Activated T-helper 2 cell treated with anti-CD3 and anti-CD28 coated beads, Interferon-gamma antibody, Interleukin-2, Interleukin-4, amounts not matched to agents 10 μg/mL and 5 μg/mL and 100 μg/mL, durations not matched to agents 14 hours and 24 hours and 36 hours (primary cell): ENCODE measurements at regions of chr2 and their contacts with region 1.

Region 1: DNA sequence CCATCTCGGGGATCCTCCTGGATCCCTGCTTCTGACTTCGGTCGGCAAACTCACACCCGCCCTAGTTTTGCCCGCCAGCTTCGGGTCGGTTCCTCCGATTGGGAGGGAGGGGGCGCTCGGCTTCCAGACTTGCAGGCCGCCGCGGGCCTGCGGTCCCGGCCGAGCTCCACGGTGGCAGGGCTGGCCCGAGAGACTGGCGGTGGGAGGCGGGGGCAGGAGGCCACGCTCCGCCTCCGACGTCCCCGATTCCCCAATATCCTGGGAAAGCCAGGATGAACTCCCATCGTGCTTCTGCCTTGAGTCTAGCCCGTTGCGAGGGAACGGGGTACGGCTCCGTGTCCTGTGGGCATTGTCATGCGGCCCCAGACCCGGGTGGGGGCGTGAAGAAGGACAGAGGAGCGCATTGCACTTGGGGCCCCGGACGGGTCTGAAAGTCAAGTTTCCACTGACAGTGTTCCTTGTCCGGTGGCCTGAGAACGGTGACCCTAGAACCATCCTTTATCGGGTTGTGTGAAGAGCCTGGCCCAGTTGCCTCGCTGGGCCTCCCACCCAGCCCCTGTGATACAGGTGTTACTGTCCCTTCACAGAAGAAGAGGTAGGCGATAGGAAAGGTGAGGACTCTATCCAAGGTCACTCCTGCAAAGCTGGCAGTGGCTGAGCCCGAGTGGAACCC is 2.4 kb upstream of the INHBB start:
- DNase-seq: peak; percentile 38
- H3K4me3 Mint-ChIP-seq: peak overlapping the region; percentile 37
- H3K27ac Mint-ChIP-seq: no peak overlapping the region
- H3K4me1 Mint-ChIP-seq: peaks cover 10% of the 10 kb centered on the region
- H3K27me3 Mint-ChIP-seq: peaks cover 51% of the 10 kb centered on the region

Region 2: GRCh38 chr2:120109186-120110061 is 234.1 kb before region 1 on chr2:
- intact Hi-C with region 1: loop called (anchors 10 kb)
- DNase-seq: no peak
- H3K4me3 Mint-ChIP-seq: peak overlapping the region; percentile 57
- H3K27ac Mint-ChIP-seq: peak overlapping the region; percentile 38
- H3K4me1 Mint-ChIP-seq: peaks cover 25% of the 10 kb centered on the region
- H3K27me3 Mint-ChIP-seq: peaks cover 29% of the 10 kb centered on the region

Region 3: GRCh38 chr2:120123090-120123489 is 220.5 kb before region 1 on chr2:
- intact Hi-C with region 1: no loop called
- DNase-seq: no peak
- H3K4me3 Mint-ChIP-seq: no peak overlapping the region
- H3K27ac Mint-ChIP-seq: no peak overlapping the region
- H3K4me1 Mint-ChIP-seq: no peaks in the 10 kb centered on the region
- H3K27me3 Mint-ChIP-seq: peaks cover 11% of the 10 kb centered on the region

Region 4: GRCh38 chr2:120206022-120206581 is 137.5 kb before region 1 on chr2:
- intact Hi-C with region 1: no loop called
- DNase-seq: no peak
- H3K4me3 Mint-ChIP-seq: no peak overlapping the region
- H3K27ac Mint-ChIP-seq: no peak overlapping the region
- H3K4me1 Mint-ChIP-seq: peaks cover 13% of the 10 kb centered on the region
- H3K27me3 Mint-ChIP-seq: no peaks in the 10 kb centered on the region

Region 5: GRCh38 chr2:120441744-120442471 is 98.3 kb after region 1 on chr2:
- intact Hi-C with region 1: loop called (anchors 2 kb)
- DNase-seq: no peak
- H3K4me3 Mint-ChIP-seq: no peak overlapping the region
- H3K27ac Mint-ChIP-seq: no peak overlapping the region
- H3K4me1 Mint-ChIP-seq: peaks cover 2% of the 10 kb centered on the region
- H3K27me3 Mint-ChIP-seq: peaks cover 63% of the 10 kb centered on the region

Region 6: DNA sequence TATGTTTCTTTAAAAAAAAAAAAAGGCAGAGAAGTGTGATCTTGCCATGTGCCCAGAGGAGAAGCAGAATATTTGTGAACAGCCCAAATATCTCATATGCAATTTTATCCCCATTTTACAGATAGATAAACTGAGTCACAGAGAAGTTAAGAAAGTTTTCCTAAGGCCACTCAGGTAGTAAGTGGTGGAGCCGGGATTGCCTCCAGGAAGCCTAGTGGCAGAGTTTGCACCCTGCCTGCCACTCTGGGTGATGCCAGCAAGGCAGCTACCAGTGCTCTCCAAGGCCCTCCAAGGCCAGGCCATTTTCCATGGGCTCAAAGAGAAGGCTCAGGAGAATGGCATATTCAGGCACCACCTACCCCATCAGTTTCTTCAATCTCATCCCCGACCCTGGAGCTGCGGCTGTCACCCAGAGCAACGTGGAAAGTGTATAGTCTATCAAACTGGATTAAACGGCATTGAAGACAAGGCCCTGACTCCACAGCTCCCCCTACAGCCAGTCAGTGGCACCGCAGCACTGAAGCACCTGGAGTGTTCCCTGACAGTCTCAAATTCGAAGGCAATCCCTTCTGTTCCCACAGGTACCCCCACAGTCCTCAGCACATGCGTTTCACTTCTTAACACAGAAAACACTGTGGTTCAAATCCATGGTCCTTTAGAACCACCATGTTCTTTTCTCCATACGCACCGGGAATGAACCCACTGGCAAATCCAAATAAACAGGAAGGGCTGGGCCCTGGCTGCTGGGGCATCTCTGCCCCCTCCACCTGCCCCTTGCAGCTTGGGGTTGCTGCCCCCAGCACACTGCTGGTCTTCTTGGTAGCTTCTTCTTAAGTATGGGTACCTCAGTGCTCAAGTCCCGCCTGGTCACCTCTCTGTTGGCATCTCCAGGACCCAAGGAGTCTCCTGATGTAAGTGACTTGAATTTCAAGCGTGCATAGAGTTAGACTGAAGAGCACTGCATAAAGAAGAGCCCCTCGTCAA is 177.7 kb after region 1 on chr2:
- intact Hi-C with region 1: loop called (anchors 10 kb)
- DNase-seq: peak; percentile 16
- H3K4me3 Mint-ChIP-seq: no peak overlapping the region
- H3K27ac Mint-ChIP-seq: no peak overlapping the region
- H3K4me1 Mint-ChIP-seq: no peaks in the 10 kb centered on the region
- H3K27me3 Mint-ChIP-seq: peaks cover 13% of the 10 kb centered on the region

Region 7: GRCh38 chr2:120680136-120680761 is 336.7 kb after region 1 on chr2:
- intact Hi-C with region 1: loop called (anchors 1 kb)
- DNase-seq: peak; percentile 52
- H3K4me3 Mint-ChIP-seq: no peak overlapping the region
- H3K27ac Mint-ChIP-seq: no peak overlapping the region
- H3K4me1 Mint-ChIP-seq: no peaks in the 10 kb centered on the region
- H3K27me3 Mint-ChIP-seq: peaks cover 7% of the 10 kb centered on the region

Region 8: DNA sequence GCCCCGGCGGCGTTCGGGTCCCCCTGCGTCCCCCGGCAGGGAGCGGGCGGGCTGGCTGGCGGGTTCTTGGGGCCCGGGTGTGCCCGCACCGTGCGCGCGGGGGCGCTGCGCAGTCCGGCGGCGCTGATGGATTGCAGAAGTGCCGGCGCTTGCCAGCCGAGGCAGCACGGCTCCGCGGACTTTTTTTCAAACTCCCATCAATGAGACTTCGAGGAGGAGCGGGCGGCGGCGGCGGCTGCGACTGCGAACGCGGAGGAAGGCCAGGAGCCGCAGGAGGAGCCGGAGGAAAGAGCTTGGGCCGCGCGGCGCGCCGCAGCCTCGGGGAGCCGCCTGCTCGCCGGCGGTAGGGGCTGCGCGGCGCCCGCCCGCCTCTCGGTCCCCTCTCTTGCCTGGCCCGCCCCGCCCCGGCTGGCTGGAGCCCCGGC is 392.2 kb after region 1 on chr2 and contains the start of gene GLI2:
- intact Hi-C with region 1: loop called (anchors 5 kb)
- DNase-seq: peak; percentile 28
- H3K4me3 Mint-ChIP-seq: peak within 1 kb of the TSS; percentile 54
- H3K27ac Mint-ChIP-seq: no peak within 1 kb of the TSS
- H3K4me1 Mint-ChIP-seq: peaks cover 11% of the 10 kb centered on the region
- H3K27me3 Mint-ChIP-seq: peaks cover 60% of the 10 kb centered on the region
- total RNA-seq, gene GLI2: 0.07 TPM in 1 of 2 replicates, not detected in the other